ENCODE measurements at regions of chr19 and their contacts with region 1.

Region 1: GRCh38 chr19:48965040-48965805 is at the start of gene FTL:
- DNase-seq: peak; percentile 96
- ATAC-seq: peak; percentile 83
- H3K4me3 ChIP-seq: peak within 1 kb of the TSS; percentile 73 to 90 (median 84)
- H3K4me3 Mint-ChIP-seq: peak within 1 kb of the TSS; percentile 100
- H3K27ac ChIP-seq: peak within 1 kb of the TSS; percentile 75 to 84
- H3K27ac Mint-ChIP-seq: peak within 1 kb of the TSS; percentile 99
- H3K4me1 ChIP-seq: peaks cover 41 to 57% of the 10 kb centered on the region in 2 donors
- H3K4me1 Mint-ChIP-seq: peaks cover 70% of the 10 kb centered on the region
- H3K27me3 ChIP-seq: no peaks in the 10 kb centered on the region
- H3K27me3 Mint-ChIP-seq: no peaks in the 10 kb centered on the region
- CTCF ChIP-seq: no peak
- total RNA-seq, gene FTL: 881 and 937 TPM in 2 replicates

Region 2: GRCh38 chr19:48646001-48646721 is 319.1 kb before region 1 on chr19 and contains the start of gene CA11:
- CTCF ChIA-PET with region 1: no interaction called
- POLR2A ChIA-PET with region 1: interaction called, 10 read pairs
- intact Hi-C with region 1: loop called (anchors 1 kb)
- DNase-seq: peak; percentile 94
- ATAC-seq: peak; percentile 87
- H3K4me3 ChIP-seq: peak within 1 kb of the TSS; percentile 52 to 95 (median 75)
- H3K4me3 Mint-ChIP-seq: peak within 1 kb of the TSS; percentile 96
- H3K27ac ChIP-seq: peak within 1 kb of the TSS; percentile 74 to 80
- H3K27ac Mint-ChIP-seq: peak within 1 kb of the TSS; percentile 98
- H3K4me1 ChIP-seq: peaks cover 23 to 45% of the 10 kb centered on the region in 2 donors
- H3K4me1 Mint-ChIP-seq: peaks cover 50% of the 10 kb centered on the region
- H3K27me3 ChIP-seq: no peaks in the 10 kb centered on the region
- H3K27me3 Mint-ChIP-seq: no peaks in the 10 kb centered on the region
- CTCF ChIP-seq: peak; percentile 80
- total RNA-seq, gene CA11: 25.7 and 27.7 TPM in 2 replicates

Region 3: DNA sequence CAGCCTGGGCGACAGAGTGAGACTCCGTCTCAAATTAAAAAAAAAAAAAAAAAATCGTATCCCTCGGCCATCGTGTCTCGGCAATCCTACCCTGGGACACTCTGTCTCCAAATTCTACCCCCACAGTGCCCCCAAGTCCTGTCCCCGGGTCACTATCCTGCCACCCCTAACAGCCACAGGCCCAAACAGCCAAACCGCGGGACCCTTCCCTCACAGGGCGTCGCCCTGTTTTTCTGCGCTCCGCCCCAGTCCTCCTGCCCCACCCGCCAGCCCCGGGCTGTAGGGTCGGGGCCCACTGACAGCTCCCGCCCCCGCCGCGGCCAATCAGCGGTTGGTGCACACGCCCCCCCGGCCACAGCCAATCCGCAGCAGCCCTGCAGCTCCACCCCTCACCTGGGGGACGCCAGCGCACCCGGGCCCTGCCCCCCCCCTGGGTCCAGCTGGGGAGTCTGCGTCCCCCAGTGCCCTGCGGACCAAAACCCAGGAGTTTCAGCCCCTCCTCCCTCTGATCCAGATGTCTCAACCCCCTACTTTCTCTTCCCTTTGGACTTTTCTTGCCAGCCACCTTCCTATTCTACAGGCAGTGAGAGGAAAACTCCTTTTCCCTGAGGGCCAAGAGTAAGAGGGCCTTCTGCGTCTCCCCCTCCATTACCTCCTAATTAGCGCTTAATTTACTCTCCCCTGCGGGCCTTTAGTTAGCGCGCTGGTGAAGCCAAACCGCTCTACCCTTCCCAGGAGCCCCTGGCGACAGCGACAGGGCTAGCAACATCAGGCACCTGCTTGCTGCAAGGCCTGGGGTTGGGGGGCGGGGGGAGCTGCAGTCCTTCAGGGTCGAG is 152.9 kb before region 1 on chr19:
- CTCF ChIA-PET with region 1: no interaction called
- POLR2A ChIA-PET with region 1: interaction called, 11 read pairs
- intact Hi-C with region 1: no loop called
- DNase-seq: peak; percentile 81
- ATAC-seq: peak; percentile 83
- H3K4me3 ChIP-seq: peak overlapping the region in 4 of 5 experiments; percentile 62 to 88 (median 74)
- H3K4me3 Mint-ChIP-seq: peak overlapping the region; percentile 93
- H3K27ac ChIP-seq: peak overlapping the region; percentile 16 to 22
- H3K27ac Mint-ChIP-seq: peak overlapping the region; percentile 97
- H3K4me1 ChIP-seq: peaks cover 7 to 26% of the 10 kb centered on the region in 2 donors
- H3K4me1 Mint-ChIP-seq: peaks cover 34% of the 10 kb centered on the region
- H3K27me3 ChIP-seq: no peaks in the 10 kb centered on the region
- H3K27me3 Mint-ChIP-seq: no peaks in the 10 kb centered on the region
- CTCF ChIP-seq: no peak

Region 4: GRCh38 chr19:48872182-48872883 is 92.9 kb before region 1 on chr19 and contains the start of gene PPP1R15A:
- CTCF ChIA-PET with region 1: interaction called, 30 read pairs
- POLR2A ChIA-PET with region 1: interaction called, 7 read pairs
- intact Hi-C with region 1: loop called (anchors 1 kb)
- DNase-seq: peak; percentile 99
- ATAC-seq: peak; percentile 53
- H3K4me3 ChIP-seq: peak within 1 kb of the TSS; percentile 70 to 100 (median 95)
- H3K4me3 Mint-ChIP-seq: peak within 1 kb of the TSS; percentile 98
- H3K27ac ChIP-seq: peak within 1 kb of the TSS; percentile 96 to 100
- H3K27ac Mint-ChIP-seq: peak within 1 kb of the TSS; percentile 100
- H3K4me1 ChIP-seq: peaks cover 30 to 48% of the 10 kb centered on the region in 2 donors
- H3K4me1 Mint-ChIP-seq: peaks cover 40% of the 10 kb centered on the region
- H3K27me3 ChIP-seq: peaks cover 0 to 2% (median 0%) of the 10 kb centered on the region in 4 experiments
- H3K27me3 Mint-ChIP-seq: peaks cover 5% of the 10 kb centered on the region
- CTCF ChIP-seq: no peak
- total RNA-seq, gene PPP1R15A: 122 and 128 TPM in 2 replicates

Region 5: DNA sequence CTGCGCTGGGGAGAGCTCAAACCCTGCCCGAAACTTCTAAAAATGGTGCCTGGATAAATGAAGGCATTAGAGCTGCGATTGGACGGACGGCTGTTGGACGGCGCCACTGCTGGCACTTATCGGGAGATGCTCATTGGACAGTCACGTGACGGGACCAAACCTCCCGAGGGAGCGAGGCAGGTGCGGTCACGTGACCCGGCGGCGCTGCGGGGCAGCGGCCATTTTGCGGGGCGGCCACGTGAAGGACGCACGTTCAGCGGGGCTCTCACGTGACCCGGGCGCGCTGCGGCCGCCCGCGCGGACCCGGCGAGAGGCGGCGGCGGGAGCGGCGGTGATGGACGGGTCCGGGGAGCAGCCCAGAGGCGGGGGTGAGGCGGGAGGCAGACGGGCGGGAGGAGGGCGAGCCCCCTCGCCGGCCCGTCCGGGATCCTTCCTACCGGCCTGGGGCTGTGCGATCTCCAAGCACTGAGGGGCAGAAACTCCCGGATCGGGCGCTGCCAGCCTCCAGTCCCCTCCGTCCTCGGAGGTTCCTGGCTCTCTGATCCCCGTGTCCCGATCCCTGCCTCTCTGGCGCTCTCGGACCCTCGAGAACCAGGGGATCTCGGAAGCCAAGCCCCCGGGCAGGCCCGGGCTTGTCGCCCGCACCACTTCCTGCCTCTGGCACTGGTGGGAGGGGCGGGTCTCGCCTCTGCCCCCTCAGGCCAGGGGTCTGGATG is 10.5 kb before region 1 on chr19 and contains the start of gene BAX:
- CTCF ChIA-PET with region 1: interaction called, 14 read pairs
- POLR2A ChIA-PET with region 1: interaction called, 6 read pairs
- intact Hi-C with region 1: loop called (anchors 1 kb)
- DNase-seq: peak; percentile 92
- ATAC-seq: peak; percentile 88
- H3K4me3 ChIP-seq: peak within 1 kb of the TSS; percentile 47 to 99 (median 87)
- H3K4me3 Mint-ChIP-seq: peak within 1 kb of the TSS; percentile 85
- H3K27ac ChIP-seq: peak within 1 kb of the TSS; percentile 84 to 89
- H3K27ac Mint-ChIP-seq: peak within 1 kb of the TSS; percentile 92
- H3K4me1 ChIP-seq: peaks cover 6 to 16% of the 10 kb centered on the region in 2 donors
- H3K4me1 Mint-ChIP-seq: peaks cover 20% of the 10 kb centered on the region
- H3K27me3 ChIP-seq: no peaks in the 10 kb centered on the region
- H3K27me3 Mint-ChIP-seq: no peaks in the 10 kb centered on the region
- CTCF ChIP-seq: no peak
- total RNA-seq, gene BAX: 92.7 and 95.3 TPM in 2 replicates

Region 6: DNA sequence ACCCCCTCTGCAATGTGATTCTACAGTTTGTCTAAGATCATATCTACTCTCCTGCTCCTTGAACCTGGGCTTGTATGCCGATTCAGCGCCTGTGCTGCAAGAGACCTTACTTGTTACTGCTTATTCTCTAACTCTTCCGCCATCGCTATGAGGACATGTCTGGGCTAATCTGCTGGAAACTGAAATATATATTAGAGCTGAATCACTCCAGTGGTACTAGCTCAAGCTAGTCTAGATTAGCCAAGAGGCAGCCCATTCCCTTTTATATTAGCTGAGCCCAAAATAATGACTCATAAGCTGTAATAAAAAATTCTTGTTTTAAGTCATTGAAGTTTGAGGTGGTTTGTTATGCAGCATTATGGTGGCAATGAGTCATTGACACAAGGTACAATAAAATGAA is 307.0 kb after region 1 on chr19:
- CTCF ChIA-PET with region 1: no interaction called
- POLR2A ChIA-PET with region 1: no interaction called
- intact Hi-C with region 1: no loop called
- DNase-seq: no peak
- ATAC-seq: no peak
- H3K4me3 ChIP-seq: no peak overlapping the region
- H3K4me3 Mint-ChIP-seq: no peak overlapping the region
- H3K27ac ChIP-seq: no peak overlapping the region
- H3K27ac Mint-ChIP-seq: no peak overlapping the region
- H3K4me1 ChIP-seq: no peaks in the 10 kb centered on the region
- H3K4me1 Mint-ChIP-seq: no peaks in the 10 kb centered on the region
- H3K27me3 ChIP-seq: no peaks in the 10 kb centered on the region
- H3K27me3 Mint-ChIP-seq: peaks cover 13% of the 10 kb centered on the region
- CTCF ChIP-seq: no peak

Region 7: GRCh38 chr19:50329146-50329925 is 1364.1 kb after region 1 on chr19 and contains the start of gene KCNC3:
- CTCF ChIA-PET with region 1: no interaction called
- POLR2A ChIA-PET with region 1: interaction called, 11 read pairs
- intact Hi-C with region 1: no loop called
- DNase-seq: peak; percentile 99
- ATAC-seq: peak; percentile 64
- H3K4me3 ChIP-seq: peak within 1 kb of the TSS in 4 of 5 experiments; percentile 41 to 71 (median 56)
- H3K4me3 Mint-ChIP-seq: peak within 1 kb of the TSS; percentile 91
- H3K27ac ChIP-seq: peak within 1 kb of the TSS; percentile 50 to 77
- H3K27ac Mint-ChIP-seq: peak within 1 kb of the TSS; percentile 94
- H3K4me1 ChIP-seq: peaks cover 62 to 80% of the 10 kb centered on the region in 2 donors
- H3K4me1 Mint-ChIP-seq: peaks cover 79% of the 10 kb centered on the region
- H3K27me3 ChIP-seq: peaks cover 0 to 9% (median 2%) of the 10 kb centered on the region in 4 experiments
- H3K27me3 Mint-ChIP-seq: peaks cover 12% of the 10 kb centered on the region
- CTCF ChIP-seq: no peak
- total RNA-seq, gene KCNC3: 23.0 and 24.4 TPM in 2 replicates